ENCODE measurements at regions of chr16 and their contacts with region 1.

Region 1: GRCh38 chr16:84186685-84187437 is at the start of gene TAF1C:
- DNase-seq: peak; percentile 93
- H3K4me3 ChIP-seq: peak within 1 kb of the TSS; percentile 93
- H3K27ac ChIP-seq: peak within 1 kb of the TSS; percentile 92
- H3K4me1 ChIP-seq: peaks cover 52% of the 10 kb centered on the region
- H3K27me3 ChIP-seq: no peaks in the 10 kb centered on the region
- CTCF ChIP-seq: peak; percentile 97
- total RNA-seq, gene TAF1C: 29.0 TPM

Region 2: GRCh38 chr16:83928341-83929055 is 258.4 kb before region 1 on chr16:
- intact Hi-C with region 1: no loop called
- DNase-seq: no peak
- H3K4me3 ChIP-seq: no peak overlapping the region
- H3K27ac ChIP-seq: no peak overlapping the region
- H3K4me1 ChIP-seq: peaks cover 27% of the 10 kb centered on the region
- H3K27me3 ChIP-seq: no peaks in the 10 kb centered on the region
- CTCF ChIP-seq: no peak

Region 3: DNA sequence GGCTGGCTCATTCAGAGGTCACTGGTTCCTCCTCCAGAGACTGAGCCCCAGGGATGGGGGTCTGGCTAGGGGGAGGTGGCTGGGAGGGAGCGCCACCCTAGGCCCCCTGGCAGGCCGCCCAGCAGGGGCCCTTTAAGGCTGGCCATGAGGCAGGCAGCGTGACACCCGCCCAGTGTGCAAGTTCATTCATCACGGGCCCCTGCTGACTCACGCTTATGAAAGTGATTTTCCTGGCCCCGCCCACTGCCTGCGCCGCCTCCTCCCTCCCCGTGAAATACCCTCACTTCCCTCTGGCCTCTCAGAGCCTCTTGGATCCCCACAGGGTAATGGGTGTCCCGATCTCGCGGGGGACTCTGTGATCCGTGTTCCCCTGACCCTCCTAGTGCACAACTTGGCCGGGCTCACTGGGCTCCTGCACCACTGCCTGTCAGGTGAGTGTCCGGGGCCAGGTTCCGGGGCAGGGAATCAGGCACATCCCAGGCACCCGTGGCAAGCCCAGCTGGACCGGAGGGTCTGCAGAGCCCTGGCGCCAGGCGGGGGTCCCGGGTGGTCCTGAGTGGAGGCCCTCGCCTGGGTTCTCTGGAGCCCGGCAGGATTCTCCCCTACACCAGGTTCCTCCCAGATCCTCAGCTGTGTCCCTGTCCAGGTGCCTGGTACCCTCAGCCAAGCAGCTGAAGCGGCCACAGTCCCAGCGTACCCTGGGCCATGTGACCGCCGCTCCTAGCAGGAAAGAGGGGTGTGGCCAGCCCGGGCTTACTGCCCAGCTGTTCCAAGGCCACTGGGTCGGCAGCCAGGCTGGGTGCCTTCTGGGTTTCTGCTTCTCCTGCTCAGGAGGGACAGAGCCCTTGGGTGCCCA is 233.7 kb before region 1 on chr16 and contains the start of gene OSGIN1:
- intact Hi-C with region 1: loop called (anchors 10 kb)
- DNase-seq: peak; percentile 94
- H3K4me3 ChIP-seq: peak within 1 kb of the TSS; percentile 83
- H3K27ac ChIP-seq: peak within 1 kb of the TSS; percentile 99
- H3K4me1 ChIP-seq: peaks cover 39% of the 10 kb centered on the region
- H3K27me3 ChIP-seq: no peaks in the 10 kb centered on the region
- CTCF ChIP-seq: no peak
- total RNA-seq, gene OSGIN1: 12.5 TPM

Region 4: GRCh38 chr16:84084570-84085270 is 102.1 kb before region 1 on chr16:
- intact Hi-C with region 1: loop called (anchors 10 kb)
- DNase-seq: peak; percentile 41
- H3K4me3 ChIP-seq: no peak overlapping the region
- H3K27ac ChIP-seq: peak overlapping the region; percentile 81
- H3K4me1 ChIP-seq: peaks cover 66% of the 10 kb centered on the region
- H3K27me3 ChIP-seq: no peaks in the 10 kb centered on the region
- CTCF ChIP-seq: peak; percentile 80

Measured in left ventricle myocardium inferior (tissue), 1 donor.